Activated naive CD4-positive, alpha-beta T cell treated with anti-CD3 and anti-CD28 coated beads for 36 hours (primary cell): ENCODE measurements at regions of chr2 and their contacts with region 1.

Region 1: GRCh38 chr2:101473911-101474701 is 806 bp downstream of the RFX8 start:
- DNase-seq: peak; percentile 64
- H3K4me3 Mint-ChIP-seq: peak overlapping the region; percentile 80
- H3K27ac Mint-ChIP-seq: no peak overlapping the region
- H3K4me1 Mint-ChIP-seq: peaks cover 6% of the 10 kb centered on the region
- H3K27me3 Mint-ChIP-seq: peaks cover 3% of the 10 kb centered on the region

Region 2: DNA sequence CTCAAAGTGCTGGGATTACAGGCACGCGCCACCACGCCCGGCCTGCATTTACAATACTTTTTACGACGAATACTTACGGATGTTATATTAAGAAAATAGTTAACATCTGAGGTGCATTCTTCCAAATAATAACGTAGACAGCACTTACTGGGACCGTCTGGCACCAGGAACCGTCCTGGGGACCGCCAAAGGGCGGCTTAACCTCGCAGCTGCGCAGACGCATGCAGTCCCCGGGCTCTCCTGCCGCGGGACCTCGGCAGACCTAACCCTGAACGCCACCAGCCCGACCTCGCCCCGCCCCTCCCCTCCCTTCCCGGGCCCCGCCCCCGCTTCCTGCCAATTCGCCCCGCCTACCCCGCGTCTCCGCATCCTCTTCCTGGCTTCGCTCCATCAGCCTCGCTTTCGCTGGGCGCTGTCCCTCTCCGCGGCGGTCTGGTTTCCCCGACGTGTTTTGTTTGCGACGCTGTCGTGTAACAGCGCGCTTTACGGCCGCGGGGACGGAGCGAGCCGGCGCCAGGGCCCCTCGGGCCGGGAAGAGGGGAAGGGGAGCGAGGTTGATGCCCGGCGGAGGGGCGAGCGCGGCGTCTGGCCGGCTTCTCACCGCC is 221.6 kb before region 1 on chr2 and contains the start of gene CNOT11:
- CTCF ChIA-PET with region 1: no interaction called
- intact Hi-C with region 1: loop called (anchors 1 kb)
- DNase-seq: peak; percentile 99
- H3K4me3 Mint-ChIP-seq: peak within 1 kb of the TSS; percentile 98
- H3K27ac Mint-ChIP-seq: peak within 1 kb of the TSS; percentile 93
- H3K4me1 Mint-ChIP-seq: peaks cover 39% of the 10 kb centered on the region
- H3K27me3 Mint-ChIP-seq: no peaks in the 10 kb centered on the region
- total RNA-seq, gene CNOT11: 38.3 to 40.3 TPM

Region 3: DNA sequence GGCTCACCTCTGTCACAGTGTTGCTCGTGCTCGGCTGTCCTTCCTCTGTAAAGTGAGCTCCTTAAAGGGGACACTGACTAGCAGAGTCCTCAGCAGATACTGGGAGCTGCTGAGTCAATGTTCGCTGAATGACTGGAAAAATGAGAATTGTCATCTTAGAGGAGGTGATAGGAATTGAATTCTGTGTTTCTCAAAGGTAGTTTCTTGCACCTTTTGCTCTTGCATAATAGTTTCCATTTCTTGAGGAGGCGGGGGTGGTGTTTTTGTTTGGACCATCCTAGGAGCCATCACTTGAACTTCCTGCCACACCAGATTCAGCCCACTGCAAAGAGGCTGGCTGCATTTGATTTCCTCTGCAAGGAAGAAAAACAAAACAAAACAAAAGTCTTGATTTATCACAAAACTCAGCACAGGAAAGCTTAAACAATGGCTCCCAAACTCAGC is 12.2 kb after region 1 on chr2:
- CTCF ChIA-PET with region 1: interaction called, 4 read pairs
- intact Hi-C with region 1: loop called (anchors 1 kb)
- DNase-seq: peak; percentile 67
- H3K4me3 Mint-ChIP-seq: no peak overlapping the region
- H3K27ac Mint-ChIP-seq: peak overlapping the region; percentile 13
- H3K4me1 Mint-ChIP-seq: peaks cover 19% of the 10 kb centered on the region
- H3K27me3 Mint-ChIP-seq: no peaks in the 10 kb centered on the region

Region 4: GRCh38 chr2:101533561-101534148 is 59.5 kb after region 1 on chr2:
- CTCF ChIA-PET with region 1: no interaction called
- intact Hi-C with region 1: no loop called
- DNase-seq: no peak
- H3K4me3 Mint-ChIP-seq: no peak overlapping the region
- H3K27ac Mint-ChIP-seq: no peak overlapping the region
- H3K4me1 Mint-ChIP-seq: no peaks in the 10 kb centered on the region
- H3K27me3 Mint-ChIP-seq: no peaks in the 10 kb centered on the region

Region 5: GRCh38 chr2:101623031-101623521 is 149.0 kb after region 1 on chr2:
- CTCF ChIA-PET with region 1: no interaction called
- intact Hi-C with region 1: loop called (anchors 1 kb)
- DNase-seq: peak; percentile 17
- H3K4me3 Mint-ChIP-seq: peak overlapping the region; percentile 17
- H3K27ac Mint-ChIP-seq: peak overlapping the region; percentile 90
- H3K4me1 Mint-ChIP-seq: peaks cover 39% of the 10 kb centered on the region
- H3K27me3 Mint-ChIP-seq: no peaks in the 10 kb centered on the region

Region 6: DNA sequence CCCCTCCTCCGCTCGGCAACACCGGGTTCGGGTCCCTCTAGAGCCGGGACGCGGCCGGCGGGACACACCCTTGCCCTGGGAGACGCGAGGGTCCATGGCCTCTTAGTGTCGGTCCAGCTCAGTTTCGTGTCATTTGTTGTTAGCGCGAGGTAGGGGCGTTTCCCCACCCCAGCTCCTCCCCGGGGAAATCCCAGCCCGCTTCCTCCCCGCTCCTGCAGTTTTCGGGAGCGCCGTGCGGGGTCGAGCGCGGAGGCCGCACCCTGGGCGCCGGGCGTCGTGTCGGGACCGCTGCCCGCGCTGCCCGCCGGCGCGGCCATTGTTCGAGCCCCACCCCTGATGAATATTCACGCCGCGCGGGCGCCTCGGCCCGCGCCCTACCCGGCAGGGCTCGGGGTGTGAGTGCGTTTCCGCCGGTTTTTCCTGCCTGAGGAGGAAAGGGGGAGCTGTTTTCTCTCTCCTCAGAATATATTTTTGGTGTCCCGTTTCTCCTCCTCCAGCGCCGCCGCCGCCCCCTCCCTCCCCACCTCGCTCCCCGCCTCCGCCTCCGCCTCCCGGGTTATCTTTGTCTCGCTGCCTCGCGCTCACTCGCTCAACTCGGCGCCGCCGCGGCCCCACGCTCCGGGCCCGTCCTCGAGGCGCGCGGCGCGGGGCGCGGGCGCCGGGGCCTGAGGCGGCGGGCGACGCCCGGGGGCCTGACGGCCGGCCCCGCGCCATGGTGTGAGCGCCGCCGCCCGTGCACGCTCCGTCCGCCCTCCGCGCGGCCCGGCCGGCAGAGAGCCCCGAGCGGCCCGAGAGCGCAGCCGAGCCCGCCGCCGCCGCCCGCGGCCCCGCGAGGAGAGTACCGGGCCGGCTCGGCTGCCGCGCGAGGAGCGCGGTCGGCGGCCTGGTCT is 223.3 kb after region 1 on chr2 and contains the start of gene MAP4K4:
- CTCF ChIA-PET with region 1: no interaction called
- intact Hi-C with region 1: loop called (anchors 2 kb)
- DNase-seq: peak; percentile 82
- H3K4me3 Mint-ChIP-seq: peak within 1 kb of the TSS; percentile 78
- H3K27ac Mint-ChIP-seq: peak within 1 kb of the TSS; percentile 81
- H3K4me1 Mint-ChIP-seq: peaks cover 33% of the 10 kb centered on the region
- H3K27me3 Mint-ChIP-seq: no peaks in the 10 kb centered on the region
- total RNA-seq, gene MAP4K4: 126 to 131 TPM

Region 7: GRCh38 chr2:101912545-101912944 is 438.4 kb after region 1 on chr2:
- CTCF ChIA-PET with region 1: no interaction called
- intact Hi-C with region 1: no loop called
- DNase-seq: peak; percentile 57
- H3K4me3 Mint-ChIP-seq: no peak overlapping the region
- H3K27ac Mint-ChIP-seq: no peak overlapping the region
- H3K4me1 Mint-ChIP-seq: peaks cover 11% of the 10 kb centered on the region
- H3K27me3 Mint-ChIP-seq: peaks cover 12% of the 10 kb centered on the region